Endothelial cell of umbilical vein (primary cell): ENCODE measurements at regions of chr2 and their contacts with region 1.

Region 1: GRCh38 chr2:234032279-234032856 is 18.1 kb upstream of the SPP2 start:
- DNase-seq: peak; percentile 57
- H3K4me3 ChIP-seq: no peak overlapping the region
- H3K27ac ChIP-seq: peak overlapping the region; percentile 59
- H3K4me1 ChIP-seq: peaks cover 17% of the 10 kb centered on the region
- H3K27me3 ChIP-seq: no peaks in the 10 kb centered on the region
- CTCF ChIP-seq: no peak
- POLR2A ChIP-seq: no peak

Region 2: GRCh38 chr2:233033672-233034071 is 998.7 kb before region 1 on chr2:
- CTCF ChIA-PET with region 1: no interaction called
- POLR2A ChIA-PET with region 1: no interaction called
- dilution Hi-C with region 1: no loop called
- intact Hi-C with region 1: no loop called
- DNase-seq: no peak
- H3K4me3 ChIP-seq: no peak overlapping the region
- H3K27ac ChIP-seq: no peak overlapping the region
- H3K4me1 ChIP-seq: no peaks in the 10 kb centered on the region
- H3K27me3 ChIP-seq: no peaks in the 10 kb centered on the region
- CTCF ChIP-seq: no peak
- POLR2A ChIP-seq: no peak

Region 3: GRCh38 chr2:233976690-233977294 is 55.6 kb before region 1 on chr2:
- CTCF ChIA-PET with region 1: no interaction called
- POLR2A ChIA-PET with region 1: no interaction called
- dilution Hi-C with region 1: no loop called
- intact Hi-C with region 1: loop called (anchors 1 kb)
- DNase-seq: peak; percentile 57
- H3K4me3 ChIP-seq: no peak overlapping the region
- H3K27ac ChIP-seq: no peak overlapping the region
- H3K4me1 ChIP-seq: peaks cover 13% of the 10 kb centered on the region
- H3K27me3 ChIP-seq: peaks cover 0 to 3% of the 10 kb centered on the region in 2 experiments
- CTCF ChIP-seq: peak; percentile 4 to 22
- POLR2A ChIP-seq: no peak